CD14-positive monocyte (primary cell): ENCODE measurements at regions of chr6 and their contacts with region 1.

Region 1: DNA sequence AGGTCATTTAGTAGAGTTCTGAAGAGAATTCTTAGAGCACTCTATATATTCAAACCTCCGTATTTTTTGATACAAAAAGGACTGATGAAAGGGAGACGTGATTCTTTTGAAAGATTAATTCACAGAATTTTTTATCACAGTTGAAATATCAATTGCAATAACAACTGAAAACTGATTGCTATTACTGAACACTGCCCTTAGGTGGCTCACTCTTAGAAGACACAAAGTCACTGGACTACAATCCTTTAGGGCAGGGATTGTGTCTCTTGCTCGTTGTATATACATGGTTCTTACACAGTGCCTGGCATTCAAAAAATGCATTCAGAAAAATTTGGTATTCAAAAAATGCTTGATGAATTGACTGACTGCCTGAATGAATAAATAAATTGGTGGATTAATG is 17.1 kb upstream of the CALHM6 start:
- DNase-seq: peak; percentile 20 to 54 (median 47)
- H3K4me3 ChIP-seq: no peak overlapping the region
- H3K4me3 Mint-ChIP-seq: no peak overlapping the region
- H3K27ac ChIP-seq: no peak overlapping the region
- H3K27ac Mint-ChIP-seq: peak overlapping the region in 2 of 7 donors; percentile 18 to 47
- H3K4me1 ChIP-seq: peaks cover 38 to 51% of the 10 kb centered on the region in 2 donors
- H3K4me1 Mint-ChIP-seq: peaks cover 43% of the 10 kb centered on the region
- H3K27me3 ChIP-seq: no peaks in the 10 kb centered on the region
- H3K27me3 Mint-ChIP-seq: peaks cover 0 to 2% (median 0%) of the 10 kb centered on the region in 3 donors
- CTCF ChIP-seq: peak; percentile 66

Region 2: DNA sequence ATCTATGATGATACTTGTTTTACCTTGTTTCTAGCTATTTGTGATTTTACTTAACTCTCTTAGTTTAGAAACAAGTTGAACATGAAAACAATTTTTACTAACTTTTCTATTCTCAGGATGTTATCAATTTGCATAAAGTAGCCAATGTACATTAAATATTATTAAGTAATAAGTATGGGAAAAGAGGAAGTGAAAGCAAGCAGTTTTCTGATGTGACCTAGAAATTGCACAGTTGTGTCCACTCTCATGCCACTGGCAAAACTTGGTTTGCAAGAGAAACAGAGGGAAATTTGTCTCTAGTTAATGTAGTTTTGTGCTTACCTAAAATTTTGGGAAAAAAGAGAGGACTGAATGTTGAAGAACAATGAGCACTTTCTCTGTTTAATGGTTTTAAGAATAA is 145.1 kb before region 1 on chr6:
- intact Hi-C with region 1: loop called in 1 of 2 experiments (anchors 10 kb)
- DNase-seq: peak; percentile 52 to 83 (median 65)
- H3K4me3 ChIP-seq: no peak overlapping the region
- H3K4me3 Mint-ChIP-seq: peak overlapping the region in 1 of 2 donors; percentile 14
- H3K27ac ChIP-seq: no peak overlapping the region
- H3K27ac Mint-ChIP-seq: peak overlapping the region in 1 of 7 donors; percentile 6
- H3K4me1 ChIP-seq: peaks cover 6 to 14% of the 10 kb centered on the region in 2 donors
- H3K4me1 Mint-ChIP-seq: peaks cover 23% of the 10 kb centered on the region
- H3K27me3 ChIP-seq: no peaks in the 10 kb centered on the region
- H3K27me3 Mint-ChIP-seq: peaks cover 0 to 1% (median 0%) of the 10 kb centered on the region in 3 donors
- CTCF ChIP-seq: no peak

Region 3: GRCh38 chr6:116371120-116371917 is 72.8 kb before region 1 on chr6:
- intact Hi-C with region 1: loop called in 1 of 2 experiments (anchors 5 kb)
- DNase-seq: peak; percentile 64 to 75 (median 72)
- H3K4me3 ChIP-seq: peak overlapping the region; percentile 73 to 90 (median 81)
- H3K4me3 Mint-ChIP-seq: peak overlapping the region; percentile 93 to 95
- H3K27ac ChIP-seq: peak overlapping the region; percentile 87 to 89
- H3K27ac Mint-ChIP-seq: peak overlapping the region; percentile 90 to 94 (median 92)
- H3K4me1 ChIP-seq: peaks cover 55 to 67% of the 10 kb centered on the region in 2 donors
- H3K4me1 Mint-ChIP-seq: peaks cover 59% of the 10 kb centered on the region
- H3K27me3 ChIP-seq: no peaks in the 10 kb centered on the region
- H3K27me3 Mint-ChIP-seq: no peaks in the 10 kb centered on the region
- CTCF ChIP-seq: no peak

Region 4: DNA sequence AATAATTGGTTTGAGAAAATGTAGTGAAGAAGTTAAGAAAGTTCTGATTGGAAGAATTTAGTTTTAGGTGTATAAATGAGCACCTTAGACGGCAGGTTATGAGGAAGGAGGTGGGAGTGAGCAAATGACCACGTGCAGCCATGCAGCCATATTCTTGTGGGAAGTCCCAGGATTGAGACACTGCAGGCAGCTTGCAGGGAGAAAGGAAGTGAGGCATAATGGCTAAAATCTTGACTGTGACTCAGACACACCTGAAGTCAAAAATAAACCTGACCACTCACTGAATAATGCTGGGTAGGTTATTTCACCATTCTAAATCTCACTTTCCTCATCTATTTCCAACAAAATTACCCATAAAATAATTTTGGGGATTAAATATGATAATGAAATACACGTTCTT is 56.7 kb before region 1 on chr6:
- intact Hi-C with region 1: loop called in 1 of 2 experiments (anchors 5 kb)
- DNase-seq: peak; percentile 89 to 99 (median 94)
- H3K4me3 ChIP-seq: peak overlapping the region in 1 of 3 experiments; percentile 13
- H3K4me3 Mint-ChIP-seq: peak overlapping the region; percentile 21 to 85
- H3K27ac ChIP-seq: peak overlapping the region; percentile 36 to 91
- H3K27ac Mint-ChIP-seq: peak overlapping the region; percentile 93 to 99 (median 99)
- H3K4me1 ChIP-seq: peaks cover 62 to 74% of the 10 kb centered on the region in 2 donors
- H3K4me1 Mint-ChIP-seq: peaks cover 62% of the 10 kb centered on the region
- H3K27me3 ChIP-seq: no peaks in the 10 kb centered on the region
- H3K27me3 Mint-ChIP-seq: peaks cover 0 to 2% (median 0%) of the 10 kb centered on the region in 3 donors
- CTCF ChIP-seq: no peak

Region 5: GRCh38 chr6:116461932-116462885 is 18.1 kb after region 1 on chr6:
- intact Hi-C with region 1: loop called in 1 of 2 experiments (anchors 2 kb)
- DNase-seq: peak; percentile 62 to 73 (median 63)
- H3K4me3 ChIP-seq: peak overlapping the region; percentile 38 to 75 (median 59)
- H3K4me3 Mint-ChIP-seq: peak overlapping the region; percentile 87 to 93
- H3K27ac ChIP-seq: peak overlapping the region; percentile 61 to 68
- H3K27ac Mint-ChIP-seq: peak overlapping the region; percentile 79 to 91 (median 87)
- H3K4me1 ChIP-seq: peaks cover 47 to 69% of the 10 kb centered on the region in 2 donors
- H3K4me1 Mint-ChIP-seq: peaks cover 68% of the 10 kb centered on the region
- H3K27me3 ChIP-seq: no peaks in the 10 kb centered on the region
- H3K27me3 Mint-ChIP-seq: peaks cover 0 to 3% (median 2%) of the 10 kb centered on the region in 3 donors
- CTCF ChIP-seq: no peak

Region 6: GRCh38 chr6:116531675-116532570 is 87.8 kb after region 1 on chr6:
- intact Hi-C with region 1: loop called in 1 of 2 experiments (anchors 10 kb)
- DNase-seq: peak; percentile 63 to 66 (median 65)
- H3K4me3 ChIP-seq: no peak overlapping the region
- H3K4me3 Mint-ChIP-seq: no peak overlapping the region
- H3K27ac ChIP-seq: no peak overlapping the region
- H3K27ac Mint-ChIP-seq: no peak overlapping the region
- H3K4me1 ChIP-seq: peaks cover 11 to 14% of the 10 kb centered on the region in 2 donors
- H3K4me1 Mint-ChIP-seq: peaks cover 19% of the 10 kb centered on the region
- H3K27me3 ChIP-seq: no peaks in the 10 kb centered on the region
- H3K27me3 Mint-ChIP-seq: peaks cover 0 to 4% (median 2%) of the 10 kb centered on the region in 3 donors
- CTCF ChIP-seq: peak; percentile 89